ENCODE measurements at regions of chr1 and their contacts with region 1.

Region 1: DNA sequence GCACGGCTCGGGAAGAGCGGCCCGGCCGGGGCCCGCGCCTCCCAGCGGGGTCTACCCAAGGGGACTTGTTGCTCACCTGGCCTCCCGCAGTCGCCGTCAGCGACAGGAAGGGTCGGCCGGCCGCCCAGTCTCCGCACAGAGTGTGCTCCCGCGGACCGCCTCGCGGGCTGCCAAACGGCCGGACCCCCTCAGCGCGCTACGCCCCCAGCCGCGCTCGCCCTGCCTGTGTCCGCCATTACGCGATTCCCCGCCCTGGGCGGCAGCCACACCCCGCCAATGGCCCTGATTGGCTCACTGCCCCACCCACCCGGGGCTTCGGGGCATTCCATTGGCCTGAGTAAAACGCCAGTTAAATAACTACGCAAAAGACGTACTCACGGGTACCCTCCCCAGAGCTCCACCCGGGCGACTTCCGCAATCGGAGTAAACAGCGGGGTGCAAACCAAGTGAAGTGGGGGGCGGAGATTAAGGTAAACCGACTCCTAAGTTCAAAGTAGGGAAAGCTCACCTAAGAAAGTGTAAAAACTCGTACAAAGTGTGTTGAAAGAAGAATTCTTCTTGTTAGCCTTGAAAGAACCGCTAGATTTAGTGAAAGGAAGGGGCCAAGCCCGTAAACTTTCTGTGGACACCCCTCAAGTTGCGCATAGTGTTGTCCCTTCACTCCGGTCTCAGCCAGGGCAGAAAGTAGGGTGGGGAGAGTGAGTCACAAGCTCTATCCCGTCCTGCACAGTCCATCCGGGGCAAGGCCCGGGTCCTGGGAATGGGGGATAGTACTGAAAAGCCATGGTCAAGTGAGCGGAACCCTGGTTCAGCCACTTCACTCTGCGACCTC is at the start of gene WASF2:
- DNase-seq: peak; percentile 95
- ATAC-seq: peak; percentile 94
- H3K4me3 ChIP-seq: peak within 1 kb of the TSS; percentile 69 to 95 (median 93)
- H3K27ac ChIP-seq: peak within 1 kb of the TSS; percentile 98
- H3K4me1 ChIP-seq: peaks cover 48% of the 10 kb centered on the region
- H3K27me3 ChIP-seq: no peaks in the 10 kb centered on the region; a peak in 1 of 5 replicates
- CTCF ChIP-seq: 0 out of 2 replicates have a peak, but pooled peaks have one; percentile 18
- EP300 ChIP-seq: no peak
- POLR2A ChIP-seq: peak; percentile 72 to 92
- RAD21 ChIP-seq: peak; percentile 47; the same call in 1 of the 2 replicates
- total RNA-seq, gene WASF2: 10.4 and 16.9 TPM in 2 replicates

Region 2: GRCh38 chr1:27416387-27417111 is 73.6 kb before region 1 on chr1:
- CTCF ChIA-PET with region 1: no interaction called
- POLR2A ChIA-PET with region 1: interaction called, 4 read pairs
- in situ Hi-C with region 1: no loop called
- intact Hi-C with region 1: loop called (anchors 5 kb)
- DNase-seq: peak; percentile 44
- ATAC-seq: peak; percentile 68
- H3K4me3 ChIP-seq: no peak overlapping the region
- H3K27ac ChIP-seq: no peak overlapping the region
- H3K4me1 ChIP-seq: no peaks in the 10 kb centered on the region
- H3K27me3 ChIP-seq: no peaks in the 10 kb centered on the region
- CTCF ChIP-seq: peak; percentile 61
- EP300 ChIP-seq: no peak
- POLR2A ChIP-seq: no peak
- RAD21 ChIP-seq: peak; percentile 39; the same call in 1 of the 2 replicates

Region 3: DNA sequence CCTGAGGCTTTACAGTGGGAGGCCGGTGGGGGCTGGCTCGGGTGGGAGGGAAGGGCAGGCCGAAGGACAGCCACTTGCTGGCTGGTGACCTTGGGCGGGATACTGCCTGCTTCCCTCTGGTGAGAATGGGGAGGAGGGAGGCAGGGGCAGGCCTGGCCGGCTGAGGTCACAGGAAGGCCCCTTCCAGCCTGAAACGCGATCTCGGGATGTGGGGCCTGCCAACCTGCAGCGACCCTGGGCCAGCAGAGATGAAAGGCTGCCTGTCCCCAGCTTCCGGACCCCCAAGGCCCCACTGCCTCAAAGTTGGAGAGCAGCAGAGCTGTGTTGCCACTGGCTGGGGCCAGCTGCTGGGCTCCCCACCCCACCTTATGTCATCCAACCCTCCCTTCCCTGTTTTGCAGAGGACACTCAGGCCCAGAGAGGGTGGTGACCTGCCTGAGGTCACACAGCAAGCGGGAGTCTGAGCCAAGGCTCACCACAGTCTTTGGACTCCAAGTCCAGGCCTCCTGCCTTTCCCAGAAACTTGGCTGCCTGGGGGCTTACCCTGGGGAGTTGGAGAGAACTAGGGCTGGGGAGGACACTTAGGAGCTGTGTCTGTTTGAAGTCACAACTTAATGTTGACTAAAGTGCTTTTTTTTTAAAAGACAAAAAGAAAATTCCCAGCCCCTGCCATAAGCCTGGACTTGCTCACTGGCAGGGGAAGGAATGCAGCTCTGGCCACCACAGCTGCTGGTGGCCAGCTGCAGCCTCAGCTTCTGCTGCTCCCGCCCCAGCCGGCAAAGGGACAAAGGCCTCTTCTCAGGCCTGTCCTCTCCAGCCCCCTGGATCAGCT is 14.7 kb after region 1 on chr1:
- CTCF ChIA-PET with region 1: no interaction called
- POLR2A ChIA-PET with region 1: interaction called, 25 read pairs
- in situ Hi-C with region 1: no loop called
- intact Hi-C with region 1: no loop called
- DNase-seq: peak; percentile 92
- ATAC-seq: peak; percentile 87
- H3K4me3 ChIP-seq: peak overlapping the region; percentile 62 to 77 (median 71)
- H3K27ac ChIP-seq: peak overlapping the region; percentile 99
- H3K4me1 ChIP-seq: peaks cover 54% of the 10 kb centered on the region
- H3K27me3 ChIP-seq: no peaks in the 10 kb centered on the region
- CTCF ChIP-seq: peak; percentile 29; the same call in 1 of the 2 replicates
- EP300 ChIP-seq: peak; percentile 47 to 71; a peak in 3 of 4 replicates
- POLR2A ChIP-seq: peak in 1 of 2 experiments; percentile 38; a peak in 1 of 4 replicates
- RAD21 ChIP-seq: 0 out of 2 replicates have a peak, but pooled peaks have one; percentile 15

Region 4: DNA sequence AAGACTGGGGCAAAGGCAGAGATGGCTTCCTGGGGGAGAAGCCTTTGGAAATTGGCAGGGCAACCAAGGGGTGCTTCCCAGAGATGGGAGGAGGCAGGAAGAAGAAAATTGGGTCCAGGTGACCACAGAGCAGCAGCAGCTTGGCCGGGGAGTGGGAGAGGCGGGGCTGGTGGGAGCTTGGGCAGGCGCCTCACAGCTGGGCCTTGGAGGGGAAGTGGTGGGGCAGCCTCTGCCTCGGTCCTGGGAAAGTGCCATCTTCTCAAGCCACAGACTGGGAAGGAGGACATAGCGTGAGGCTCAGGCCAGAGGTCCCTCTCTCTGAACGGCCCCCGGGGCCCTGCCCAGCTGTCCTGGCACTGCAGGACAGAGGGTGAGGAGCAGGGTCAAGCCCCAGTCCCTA is 23.8 kb after region 1 on chr1:
- CTCF ChIA-PET with region 1: no interaction called
- POLR2A ChIA-PET with region 1: interaction called, 20 read pairs
- in situ Hi-C with region 1: no loop called
- intact Hi-C with region 1: no loop called
- DNase-seq: no peak
- ATAC-seq: peak; percentile 28; the same call in 2 of the 3 replicates
- H3K4me3 ChIP-seq: peak overlapping the region in 1 of 3 experiments; percentile 51; a peak in 1 of 6 replicates
- H3K27ac ChIP-seq: no peak overlapping the region
- H3K4me1 ChIP-seq: peaks cover 72% of the 10 kb centered on the region
- H3K27me3 ChIP-seq: no peaks in the 10 kb centered on the region
- CTCF ChIP-seq: no peak
- EP300 ChIP-seq: no peak
- POLR2A ChIP-seq: no peak
- RAD21 ChIP-seq: no peak

Region 5: GRCh38 chr1:27519331-27520258 is 29.5 kb after region 1 on chr1:
- CTCF ChIA-PET with region 1: no interaction called
- POLR2A ChIA-PET with region 1: interaction called, 20 read pairs
- in situ Hi-C with region 1: no loop called
- intact Hi-C with region 1: no loop called
- DNase-seq: no peak
- ATAC-seq: peak; percentile 48
- H3K4me3 ChIP-seq: peak overlapping the region; percentile 46 to 67 (median 53); a peak in 5 of 6 replicates
- H3K27ac ChIP-seq: no peak overlapping the region
- H3K4me1 ChIP-seq: peaks cover 92% of the 10 kb centered on the region
- H3K27me3 ChIP-seq: no peaks in the 10 kb centered on the region
- CTCF ChIP-seq: no peak
- EP300 ChIP-seq: no peak
- POLR2A ChIP-seq: no peak
- RAD21 ChIP-seq: no peak

Measured in HepG2 (cell line).